Stomach (tissue), 19 donors: ENCODE measurements at regions of chr7 and their contacts with region 1.

Region 1: DNA sequence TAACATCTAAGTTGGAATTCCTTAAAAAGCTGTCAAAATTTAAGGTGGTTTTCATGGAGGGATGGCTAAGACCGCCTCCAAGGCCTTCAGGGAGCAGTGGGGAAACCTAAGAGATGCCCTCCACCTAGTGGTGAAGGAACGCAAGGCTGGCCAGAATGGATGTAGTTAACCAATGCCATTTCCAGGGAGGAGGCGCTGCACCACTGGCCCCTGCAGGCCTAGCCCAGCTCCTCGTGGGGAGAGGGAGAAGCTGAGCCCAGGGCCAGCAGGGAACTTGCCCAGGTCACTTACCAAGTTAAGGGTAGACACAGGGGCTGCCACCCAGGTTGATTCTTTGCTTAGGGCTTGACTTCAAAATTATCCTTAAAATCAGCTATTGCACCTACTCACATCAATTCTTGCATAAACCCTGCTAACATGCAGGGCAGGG is 32.0 kb downstream of the FIGNL1 start:
- DNase-seq: peak; percentile 77 to 88
- H3K4me3 ChIP-seq: no peak overlapping the region
- H3K27ac ChIP-seq: no peak overlapping the region
- H3K4me1 ChIP-seq: peaks cover 0 to 18% (median 0%) of the 10 kb centered on the region in 4 donors
- H3K27me3 ChIP-seq: no peaks in the 10 kb centered on the region
- CTCF ChIP-seq: peak in 5 of 7 experiments; percentile 61 to 84 (median 71)
- EP300 ChIP-seq: no peak
- POLR2A ChIP-seq: no peak

Region 2: DNA sequence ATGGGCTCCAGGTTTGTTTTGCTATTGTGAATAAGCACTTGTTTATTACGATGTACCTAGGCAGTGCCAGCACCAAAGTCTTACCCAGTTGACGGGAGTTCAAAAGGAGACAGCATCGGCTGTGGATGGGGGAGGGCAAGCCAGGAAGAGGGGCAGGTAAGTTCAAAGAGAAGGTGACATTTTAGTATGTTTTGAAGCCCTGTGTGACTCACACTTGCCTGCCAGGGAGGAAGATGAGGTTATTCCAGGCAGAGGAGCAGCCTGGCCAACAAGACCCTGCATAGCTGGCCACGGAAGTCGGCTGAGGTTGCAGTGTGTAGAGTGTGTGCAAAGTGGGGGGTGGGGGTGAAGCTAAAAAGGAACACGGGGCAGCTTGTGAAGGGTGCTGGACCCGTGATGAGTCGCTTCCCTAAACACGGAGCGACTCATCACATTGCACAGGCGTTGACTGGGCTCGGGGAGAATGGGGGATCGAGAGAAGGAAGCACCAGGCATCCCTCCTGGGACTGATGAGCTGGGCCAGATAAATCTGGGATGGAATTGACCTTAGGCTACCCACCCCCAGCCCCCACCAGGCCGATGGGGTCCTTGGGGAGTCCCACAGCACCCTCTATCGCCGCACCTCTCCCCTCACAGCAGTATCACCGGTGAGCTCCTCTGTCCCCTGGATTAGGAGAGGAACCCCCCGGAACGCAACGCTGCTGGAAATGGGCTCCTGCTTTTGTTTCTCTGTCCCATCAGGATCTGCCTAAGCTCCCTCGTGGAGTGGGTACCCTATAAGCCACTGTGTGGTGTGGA is 211.4 kb before region 1 on chr7:
- intact Hi-C with region 1: loop called (anchors 10 kb)
- DNase-seq: peak in 1 of 2 donors; percentile 37
- H3K4me3 ChIP-seq: no peak overlapping the region
- H3K27ac ChIP-seq: no peak overlapping the region
- H3K4me1 ChIP-seq: peaks cover 0 to 16% (median 2%) of the 10 kb centered on the region in 4 donors
- H3K27me3 ChIP-seq: peaks cover 0 to 11% (median 0%) of the 10 kb centered on the region in 3 donors
- CTCF ChIP-seq: no peak
- EP300 ChIP-seq: no peak
- POLR2A ChIP-seq: no peak